ENCODE measurements at regions of chr17 and their contacts with region 1.

Region 1: DNA sequence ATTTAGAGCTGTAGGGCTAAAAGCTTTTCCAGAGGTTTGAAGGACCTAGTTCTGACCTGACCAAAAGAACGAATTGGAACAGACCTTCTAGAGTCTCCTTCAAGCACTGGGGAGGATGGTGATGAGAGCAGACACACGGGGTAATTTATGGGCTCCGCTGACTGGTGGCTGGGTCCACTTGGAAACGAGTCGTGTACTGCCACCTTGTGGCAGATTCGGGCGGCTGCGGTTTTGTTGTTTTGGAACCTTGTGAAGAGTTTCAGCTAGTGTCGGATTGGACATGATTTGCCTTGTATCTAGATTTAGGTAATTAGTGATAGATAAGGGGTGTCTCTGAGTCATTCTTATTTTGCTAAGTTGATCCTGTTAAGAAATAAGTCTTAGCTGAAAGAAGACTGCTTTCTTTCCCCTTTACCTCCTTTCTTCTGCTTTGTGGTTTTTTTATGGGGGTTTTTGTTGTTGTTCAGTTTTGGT is 98.9 kb downstream of the AATF start:
- DNase-seq: peak; percentile 80 to 87
- ATAC-seq: peak; percentile 82 to 90
- H3K4me3 ChIP-seq: no peak overlapping the region
- H3K27ac ChIP-seq: no peak overlapping the region
- H3K4me1 ChIP-seq: peaks cover 4% of the 10 kb centered on the region; the same call in 2 of the 3 replicates
- CTCF ChIP-seq: peak; percentile 98
- EP300 ChIP-seq: no peak
- POLR2A ChIP-seq: no peak
- RAD21 ChIP-seq: peak; percentile 96 to 97

Region 2: DNA sequence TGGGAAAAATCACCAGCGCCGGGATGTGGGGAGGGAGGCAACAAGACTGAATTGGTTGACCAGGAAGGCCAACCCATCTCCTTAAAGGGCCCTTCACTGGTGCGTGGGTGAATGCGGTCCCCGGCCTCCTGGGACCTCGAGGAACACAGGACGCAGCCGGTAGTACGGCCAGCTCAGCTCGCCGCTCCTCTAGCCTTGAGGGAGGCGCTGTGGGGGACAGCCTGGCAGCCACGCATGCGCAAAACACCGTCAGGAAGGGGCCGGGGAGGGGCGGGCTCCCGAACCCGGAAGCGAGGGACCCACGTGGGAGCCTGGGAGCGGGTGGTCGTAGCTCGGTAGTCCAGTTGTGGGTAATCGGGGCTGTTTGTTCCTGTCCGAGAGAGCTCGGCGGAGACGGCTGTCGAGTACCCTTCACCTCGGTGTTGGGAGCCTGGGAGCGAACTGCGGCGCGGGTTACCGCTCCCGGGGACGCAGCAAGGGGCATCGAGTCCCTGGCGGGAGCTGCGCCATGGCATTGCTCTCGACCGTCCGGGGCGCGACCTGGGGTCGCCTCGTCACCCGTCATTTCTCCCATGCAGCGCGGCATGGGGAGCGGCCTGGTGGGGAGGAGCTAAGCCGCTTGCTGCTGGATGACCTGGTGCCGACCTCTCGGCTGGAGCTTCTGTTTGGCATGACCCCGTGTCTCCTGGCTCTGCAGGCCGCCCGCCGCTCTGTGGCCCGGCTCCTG is 446.2 kb before region 1 on chr17 and contains the start of gene MRM1:
- CTCF ChIA-PET with region 1: interaction called, 49 read pairs
- POLR2A ChIA-PET with region 1: no interaction called
- DNase-seq: peak; percentile 89 to 96
- ATAC-seq: peak; percentile 81 to 92
- H3K4me3 ChIP-seq: peak within 1 kb of the TSS; percentile 66
- H3K27ac ChIP-seq: peak within 1 kb of the TSS; percentile 87 to 94
- H3K4me1 ChIP-seq: peaks cover 24% of the 10 kb centered on the region
- CTCF ChIP-seq: peak; percentile 33; the same call in 2 of the 3 replicates
- EP300 ChIP-seq: no peak
- POLR2A ChIP-seq: peak; percentile 97
- RAD21 ChIP-seq: no peak
- polyA plus RNA-seq, gene MRM1: 11.1 and 12.7 TPM in 2 replicates

Region 3: GRCh38 chr17:36655726-36656125 is 391.9 kb before region 1 on chr17:
- CTCF ChIA-PET with region 1: interaction called, 14 read pairs
- POLR2A ChIA-PET with region 1: no interaction called
- DNase-seq: no peak
- ATAC-seq: no peak
- H3K4me3 ChIP-seq: no peak overlapping the region
- H3K27ac ChIP-seq: no peak overlapping the region
- H3K4me1 ChIP-seq: 0 out of 3 replicates have a peak, but pooled peaks cover 5% of the 10 kb centered on the region
- CTCF ChIP-seq: no peak
- EP300 ChIP-seq: no peak
- POLR2A ChIP-seq: no peak
- RAD21 ChIP-seq: no peak

Region 4: GRCh38 chr17:36934692-36935630 is 112.7 kb before region 1 on chr17:
- CTCF ChIA-PET with region 1: interaction called, 13 read pairs
- POLR2A ChIA-PET with region 1: no interaction called
- DNase-seq: peak; percentile 69 to 83
- ATAC-seq: peak; percentile 71 to 91
- H3K4me3 ChIP-seq: peak overlapping the region; percentile 59
- H3K27ac ChIP-seq: peak overlapping the region; percentile 71 to 88
- H3K4me1 ChIP-seq: peaks cover 12% of the 10 kb centered on the region
- CTCF ChIP-seq: no peak
- EP300 ChIP-seq: no peak
- POLR2A ChIP-seq: peak; percentile 33
- RAD21 ChIP-seq: no peak

Region 5: GRCh38 chr17:37025847-37026530 is 21.7 kb before region 1 on chr17:
- CTCF ChIA-PET with region 1: interaction called, 16 read pairs
- POLR2A ChIA-PET with region 1: no interaction called
- DNase-seq: no peak
- ATAC-seq: no peak; a peak in 1 of 6 replicates
- H3K4me3 ChIP-seq: no peak overlapping the region
- H3K27ac ChIP-seq: no peak overlapping the region
- H3K4me1 ChIP-seq: no peaks in the 10 kb centered on the region
- CTCF ChIP-seq: no peak
- EP300 ChIP-seq: no peak
- POLR2A ChIP-seq: no peak
- RAD21 ChIP-seq: no peak

Region 6: GRCh38 chr17:37089956-37090355 is 42.3 kb after region 1 on chr17:
- CTCF ChIA-PET with region 1: interaction called, 25 read pairs
- POLR2A ChIA-PET with region 1: no interaction called
- DNase-seq: no peak
- ATAC-seq: no peak
- H3K4me3 ChIP-seq: no peak overlapping the region
- H3K27ac ChIP-seq: no peak overlapping the region
- H3K4me1 ChIP-seq: peaks cover 10% of the 10 kb centered on the region; the same call in 1 of the 3 replicates
- CTCF ChIP-seq: no peak
- EP300 ChIP-seq: no peak
- POLR2A ChIP-seq: no peak
- RAD21 ChIP-seq: no peak